ENCODE measurements at regions of chr17 and their contacts with region 1.

Region 1: GRCh38 chr17:55144518-55144917 is 120.2 kb upstream of the HLF start:
- DNase-seq: no peak
- ATAC-seq: no peak
- H3K4me3 ChIP-seq: no peak overlapping the region
- H3K27ac ChIP-seq: no peak overlapping the region
- H3K4me1 ChIP-seq: no peaks in the 10 kb centered on the region
- H3K27me3 ChIP-seq: no peaks in the 10 kb centered on the region
- CTCF ChIP-seq: no peak
- POLR2A ChIP-seq: no peak

Region 2: GRCh38 chr17:55037828-55038227 is 106.7 kb before region 1 on chr17:
- intact Hi-C with region 1: no loop called
- DNase-seq: no peak
- ATAC-seq: no peak
- H3K4me3 ChIP-seq: no peak overlapping the region
- H3K27ac ChIP-seq: no peak overlapping the region
- H3K4me1 ChIP-seq: no peaks in the 10 kb centered on the region
- H3K27me3 ChIP-seq: no peaks in the 10 kb centered on the region
- CTCF ChIP-seq: no peak
- POLR2A ChIP-seq: no peak

Region 3: GRCh38 chr17:55090079-55090492 is 54.4 kb before region 1 on chr17:
- intact Hi-C with region 1: no loop called
- DNase-seq: no peak
- ATAC-seq: no peak
- H3K4me3 ChIP-seq: no peak overlapping the region
- H3K27ac ChIP-seq: peak overlapping the region in 1 of 12 donors; percentile 28
- H3K4me1 ChIP-seq: peaks cover 0 to 21% (median 0%) of the 10 kb centered on the region in 12 donors
- H3K27me3 ChIP-seq: no peaks in the 10 kb centered on the region
- CTCF ChIP-seq: no peak
- POLR2A ChIP-seq: no peak

Region 4: DNA sequence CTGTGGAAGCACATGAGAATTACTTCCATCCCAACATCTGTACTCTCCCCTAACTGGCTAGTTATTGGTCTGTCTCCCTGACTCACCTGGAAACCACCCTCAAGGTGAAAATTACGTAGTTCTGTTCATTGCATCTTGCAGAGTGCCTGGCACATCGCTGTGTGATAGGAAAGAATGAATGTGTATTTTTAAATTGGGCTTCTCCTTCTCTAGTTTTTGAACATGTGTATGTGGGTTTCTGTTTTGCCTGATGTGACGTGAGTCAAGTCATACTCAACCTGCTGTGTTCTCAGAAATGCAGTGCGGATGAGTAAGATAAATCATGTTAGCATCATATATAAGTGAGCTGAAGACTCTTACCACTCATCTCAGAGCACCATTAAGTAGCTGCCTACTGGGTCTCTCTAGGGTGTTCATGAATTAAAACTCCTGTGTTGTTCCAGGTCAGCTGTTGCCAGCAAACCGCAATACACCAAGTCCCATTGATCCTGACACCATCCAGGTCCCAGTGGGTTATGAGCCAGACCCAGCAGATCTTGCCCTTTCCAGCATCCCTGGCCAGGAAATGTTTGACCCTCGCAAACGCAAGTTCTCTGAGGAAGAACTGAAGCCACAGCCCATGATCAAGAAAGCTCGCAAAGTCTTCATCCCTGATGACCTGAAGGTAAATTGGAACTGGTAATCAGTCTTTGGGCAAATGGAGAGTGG is 170.4 kb after region 1 on chr17:
- intact Hi-C with region 1: loop called in 1 of 10 experiments (anchors 10 kb)
- DNase-seq: no peak
- ATAC-seq: no peak
- H3K4me3 ChIP-seq: no peak overlapping the region
- H3K27ac ChIP-seq: no peak overlapping the region
- H3K4me1 ChIP-seq: peaks cover 0 to 3% (median 0%) of the 10 kb centered on the region in 12 donors
- H3K27me3 ChIP-seq: no peaks in the 10 kb centered on the region
- CTCF ChIP-seq: no peak
- POLR2A ChIP-seq: no peak

Measured in heart left ventricle (tissue), 16 donors.